ENCODE measurements at regions of chr15 and their contacts with region 1.

Region 1: DNA sequence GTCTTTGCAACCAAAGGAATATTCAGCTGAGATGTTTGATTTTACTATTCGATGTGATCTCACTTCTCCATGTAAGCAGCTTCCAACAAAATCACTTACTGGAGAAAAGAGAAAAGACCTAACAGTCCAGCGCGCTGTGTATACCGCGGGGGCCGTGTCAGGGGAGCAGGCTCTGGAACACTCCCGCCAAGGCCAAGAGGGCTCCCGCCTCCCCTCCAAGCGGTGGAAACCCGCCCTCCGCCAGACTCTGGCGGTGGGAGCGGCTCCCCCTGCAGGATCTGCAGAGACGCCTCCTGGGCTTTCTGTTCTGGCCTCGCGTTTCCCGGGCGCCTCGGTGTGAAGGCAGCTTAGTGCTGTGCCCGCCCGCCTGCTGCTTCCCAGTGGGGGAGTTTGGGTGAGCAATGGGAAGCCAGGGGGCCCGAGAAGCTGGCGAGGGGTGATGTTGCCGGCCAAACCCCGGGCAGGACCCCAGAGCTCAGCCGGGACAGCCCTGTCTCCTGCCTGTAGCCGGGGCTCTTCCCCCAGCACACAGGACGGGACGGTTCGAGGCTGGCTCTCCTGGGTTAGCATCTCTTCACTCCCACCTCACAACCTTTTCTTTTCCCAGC is 36.3 kb downstream of the CHST14 start:
- DNase-seq: peak; percentile 87
- ATAC-seq: peak; percentile 91
- H3K4me3 ChIP-seq: peak overlapping the region; percentile 59
- H3K27ac ChIP-seq: no peak overlapping the region
- H3K4me1 ChIP-seq: peaks cover 13% of the 10 kb centered on the region
- H3K27me3 ChIP-seq: no peaks in the 10 kb centered on the region
- CTCF ChIP-seq: peak; percentile 77

Region 2: DNA sequence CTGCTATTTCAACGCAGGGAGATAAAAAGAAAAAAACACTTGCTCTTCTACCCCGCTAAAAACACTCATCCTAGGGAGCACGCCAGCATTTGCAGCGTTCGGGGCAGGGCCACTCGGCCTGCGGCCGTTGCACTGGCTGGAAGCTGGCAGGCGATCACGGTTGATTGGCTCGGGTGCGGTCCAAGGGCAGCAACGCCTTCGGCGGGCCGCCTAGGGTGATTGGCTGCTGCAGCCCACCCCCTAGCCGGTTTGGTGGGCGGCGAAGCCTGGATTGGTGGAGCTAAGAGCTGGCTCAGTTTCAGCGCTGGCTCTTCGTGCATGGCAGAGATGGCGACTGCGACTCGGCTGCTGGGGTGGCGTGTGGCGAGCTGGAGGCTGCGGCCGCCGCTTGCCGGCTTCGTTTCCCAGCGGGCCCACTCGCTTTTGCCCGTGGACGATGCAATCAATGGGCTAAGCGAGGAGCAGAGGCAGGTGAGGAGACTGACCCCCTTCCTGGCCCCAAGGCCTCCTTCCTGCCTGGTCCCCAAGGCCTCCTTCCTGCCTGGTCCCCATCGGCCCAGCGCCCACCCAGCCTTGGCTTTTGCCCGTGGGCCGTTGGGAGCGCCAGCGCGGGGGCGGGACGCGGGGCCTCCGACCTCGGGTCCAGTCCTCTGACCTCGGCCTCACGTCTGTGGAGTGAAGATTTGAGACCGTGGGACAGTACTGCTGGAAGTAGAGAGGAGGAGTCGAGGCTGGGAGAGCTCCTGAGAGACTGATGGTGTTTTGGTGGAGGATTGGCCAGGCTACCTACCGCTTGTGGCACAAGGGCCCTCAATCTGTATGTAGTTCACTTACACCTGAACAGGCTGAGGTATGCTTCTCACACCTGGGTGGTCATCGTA is 101.3 kb before region 1 on chr15 and contains the start of gene IVD:
- CTCF ChIA-PET with region 1: no interaction called
- POLR2A ChIA-PET with region 1: no interaction called
- intact Hi-C with region 1: no loop called
- DNase-seq: peak; percentile 98
- ATAC-seq: peak; percentile 98
- H3K4me3 ChIP-seq: peak within 1 kb of the TSS; percentile 92
- H3K27ac ChIP-seq: peak within 1 kb of the TSS; percentile 55
- H3K4me1 ChIP-seq: peaks cover 21% of the 10 kb centered on the region
- H3K27me3 ChIP-seq: no peaks in the 10 kb centered on the region
- CTCF ChIP-seq: no peak
- total RNA-seq, gene IVD: 58.9 and 59.4 TPM in 2 replicates

Region 3: GRCh38 chr15:40416056-40416455 is 91.0 kb before region 1 on chr15:
- CTCF ChIA-PET with region 1: no interaction called
- POLR2A ChIA-PET with region 1: no interaction called
- intact Hi-C with region 1: no loop called
- DNase-seq: no peak
- ATAC-seq: no peak
- H3K4me3 ChIP-seq: no peak overlapping the region
- H3K27ac ChIP-seq: no peak overlapping the region
- H3K4me1 ChIP-seq: peaks cover 13% of the 10 kb centered on the region
- H3K27me3 ChIP-seq: no peaks in the 10 kb centered on the region
- CTCF ChIP-seq: no peak

Region 4: GRCh38 chr15:40470423-40471104 is 36.5 kb before region 1 on chr15 and contains the start of gene CHST14:
- CTCF ChIA-PET with region 1: no interaction called
- POLR2A ChIA-PET with region 1: no interaction called
- intact Hi-C with region 1: loop called (anchors 2 kb)
- DNase-seq: peak; percentile 62
- ATAC-seq: peak; percentile 77
- H3K4me3 ChIP-seq: peak within 1 kb of the TSS; percentile 96
- H3K27ac ChIP-seq: peak within 1 kb of the TSS; percentile 38
- H3K4me1 ChIP-seq: peaks cover 20% of the 10 kb centered on the region
- H3K27me3 ChIP-seq: no peaks in the 10 kb centered on the region
- CTCF ChIP-seq: no peak
- total RNA-seq, gene CHST14: 12.2 and 13.0 TPM in 2 replicates